Activated T-helper 2 cell treated with anti-CD3 and anti-CD28 coated beads, Interferon-gamma antibody, Interleukin-2, Interleukin-4, amounts not matched to agents 10 μg/mL and 5 μg/mL and 100 μg/mL, durations not matched to agents 14 hours and 24 hours and 36 hours (primary cell): ENCODE measurements at regions of chr2 and their contacts with region 1.

Region 1: DNA sequence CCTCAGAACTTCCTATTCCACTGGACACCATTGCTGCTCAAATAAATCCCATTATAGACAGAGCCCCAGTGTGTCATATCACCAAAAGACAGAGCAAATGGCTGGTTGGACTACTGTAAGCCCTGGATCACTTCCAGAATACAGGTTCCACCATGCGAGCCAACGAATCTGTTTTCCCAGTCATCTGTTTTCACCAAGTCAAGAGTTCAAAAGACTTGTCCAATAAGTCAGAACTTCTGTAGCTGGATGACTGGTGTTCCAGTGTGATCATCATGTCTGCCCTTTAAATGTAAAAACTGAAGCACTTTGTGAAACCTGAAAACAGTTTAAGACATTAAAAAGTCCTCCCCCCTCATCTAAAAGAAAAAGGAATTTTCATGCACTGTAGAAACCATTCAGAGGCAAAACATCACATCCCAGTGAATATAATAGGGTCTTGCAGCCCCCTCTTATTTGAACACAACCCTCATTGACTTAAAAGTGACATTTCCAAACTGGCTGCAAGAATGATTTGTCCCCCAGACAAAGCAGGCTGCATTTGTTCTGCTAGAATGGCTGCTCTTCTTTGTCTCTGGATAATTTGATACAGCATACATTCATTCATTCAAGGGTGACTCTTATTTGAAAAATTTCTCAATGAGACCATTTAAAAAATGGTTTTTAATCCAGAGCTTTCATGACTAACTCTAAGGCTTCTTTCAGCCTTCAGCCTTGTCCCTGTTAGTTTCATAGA is 64.6 kb upstream of the TANC1 start:
- DNase-seq: no peak
- H3K4me3 Mint-ChIP-seq: no peak overlapping the region
- H3K27ac Mint-ChIP-seq: no peak overlapping the region
- H3K4me1 Mint-ChIP-seq: no peaks in the 10 kb centered on the region
- H3K27me3 Mint-ChIP-seq: peaks cover 6% of the 10 kb centered on the region

Region 2: DNA sequence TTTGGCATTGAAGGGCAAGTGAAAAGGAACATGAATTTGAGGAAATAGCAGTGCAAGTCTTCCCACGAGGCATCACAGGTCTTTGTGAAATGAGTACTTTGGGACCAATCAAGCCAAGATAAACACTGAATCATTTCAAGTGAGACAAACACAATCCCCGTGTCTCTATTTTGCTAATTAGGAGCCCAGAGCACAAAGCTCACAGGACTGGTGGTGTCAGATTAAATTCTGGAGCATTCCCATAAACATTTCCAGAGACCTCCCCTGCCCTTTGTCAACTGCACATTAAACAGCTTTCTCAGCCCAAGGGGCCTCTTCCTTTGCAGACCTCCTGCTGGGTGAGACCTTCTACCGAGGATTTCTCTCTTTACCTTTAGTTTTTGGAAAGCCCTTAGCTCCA is 58.0 kb before region 1 on chr2:
- intact Hi-C with region 1: no loop called
- DNase-seq: no peak
- H3K4me3 Mint-ChIP-seq: no peak overlapping the region
- H3K27ac Mint-ChIP-seq: no peak overlapping the region
- H3K4me1 Mint-ChIP-seq: no peaks in the 10 kb centered on the region
- H3K27me3 Mint-ChIP-seq: no peaks in the 10 kb centered on the region

Region 3: DNA sequence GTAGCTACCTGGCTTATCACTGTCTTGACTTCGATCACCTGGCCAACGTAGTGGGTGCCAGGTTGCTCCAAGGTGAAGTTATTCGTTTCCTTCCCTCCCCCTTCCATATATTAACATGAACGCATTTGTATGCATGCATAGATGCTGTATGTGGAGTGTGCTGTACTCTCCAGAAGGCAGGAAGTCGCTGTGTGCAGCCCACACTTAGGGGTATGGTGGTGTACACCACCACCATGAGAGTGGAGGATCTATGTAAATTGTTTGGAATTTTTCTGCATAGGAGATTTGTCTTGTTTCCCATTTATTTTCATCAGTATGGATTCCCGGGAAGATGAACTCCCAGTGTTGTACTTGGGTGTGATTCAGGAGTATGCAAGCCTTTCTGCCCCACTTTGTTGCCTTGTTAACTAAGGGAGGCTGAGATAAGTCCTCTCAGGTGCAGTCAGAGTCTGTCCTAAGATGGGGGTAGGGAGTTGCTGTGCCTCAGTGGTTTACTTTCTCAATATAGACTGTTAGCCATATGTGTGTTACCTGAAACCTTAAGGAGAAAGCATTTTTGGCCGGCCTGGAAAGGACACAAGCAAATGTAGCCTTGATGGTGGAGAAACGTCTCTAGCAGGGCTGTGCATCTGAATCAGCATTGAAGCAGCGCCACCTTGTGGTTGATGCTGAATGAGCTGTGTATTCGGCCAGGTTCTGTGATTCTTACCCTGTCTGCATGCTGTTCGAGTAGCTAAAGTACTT is 214.4 kb after region 1 on chr2:
- intact Hi-C with region 1: loop called (anchors 1 kb)
- DNase-seq: peak; percentile 56
- H3K4me3 Mint-ChIP-seq: no peak overlapping the region
- H3K27ac Mint-ChIP-seq: no peak overlapping the region
- H3K4me1 Mint-ChIP-seq: no peaks in the 10 kb centered on the region
- H3K27me3 Mint-ChIP-seq: peaks cover 2% of the 10 kb centered on the region

Region 4: GRCh38 chr2:159807183-159808031 is 903.5 kb after region 1 on chr2:
- intact Hi-C with region 1: loop called (anchors 2 kb)
- DNase-seq: no peak
- H3K4me3 Mint-ChIP-seq: no peak overlapping the region
- H3K27ac Mint-ChIP-seq: no peak overlapping the region
- H3K4me1 Mint-ChIP-seq: no peaks in the 10 kb centered on the region
- H3K27me3 Mint-ChIP-seq: no peaks in the 10 kb centered on the region

Region 5: DNA sequence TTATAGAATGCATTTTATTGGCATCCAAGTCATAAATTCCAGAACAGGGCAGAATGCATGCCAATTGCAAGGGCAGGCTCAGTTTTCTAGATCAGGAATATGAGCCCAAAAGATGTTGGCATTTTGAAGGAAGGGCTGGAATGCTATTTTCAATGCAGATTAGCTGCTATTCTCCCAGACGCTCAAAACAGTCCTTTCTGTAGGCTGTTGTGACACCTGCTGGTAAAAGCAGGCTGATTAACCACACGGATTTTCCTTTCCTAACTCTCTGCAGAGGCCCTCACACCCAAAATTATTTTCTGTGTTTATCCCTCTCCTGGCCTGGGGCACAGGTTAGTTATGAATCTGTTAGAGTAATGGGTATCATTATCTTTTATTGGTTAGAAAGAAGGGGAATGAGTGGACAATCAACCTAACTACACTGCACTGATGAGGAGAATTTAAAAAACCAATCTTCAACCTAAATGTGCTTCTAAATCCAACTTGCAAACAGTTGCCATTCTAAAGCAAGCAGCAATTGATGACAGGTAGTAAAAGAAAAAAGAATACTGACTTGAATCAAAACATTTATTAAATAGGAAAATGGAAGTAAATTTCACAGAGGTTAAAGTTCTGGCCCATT is 1064.5 kb after region 1 on chr2:
- intact Hi-C with region 1: loop called (anchors 2 kb)
- DNase-seq: no peak
- H3K4me3 Mint-ChIP-seq: no peak overlapping the region
- H3K27ac Mint-ChIP-seq: no peak overlapping the region
- H3K4me1 Mint-ChIP-seq: no peaks in the 10 kb centered on the region
- H3K27me3 Mint-ChIP-seq: no peaks in the 10 kb centered on the region